ENCODE measurements at regions of chrX and their contacts with region 1.

Region 1: GRCh38 chrX:102599084-102599950 is at the start of gene ARMCX5:
- DNase-seq: peak; percentile 90
- H3K4me3 Mint-ChIP-seq: peak within 1 kb of the TSS; percentile 93
- H3K27ac Mint-ChIP-seq: peak within 1 kb of the TSS; percentile 94
- H3K4me1 Mint-ChIP-seq: peaks cover 15% of the 10 kb centered on the region
- H3K27me3 Mint-ChIP-seq: no peaks in the 10 kb centered on the region
- total RNA-seq, gene ARMCX5: 8.1 and 8.9 TPM in 2 replicates

Region 2: GRCh38 chrX:102659790-102660757 is 60.8 kb after region 1 on chrX:
- intact Hi-C with region 1: loop called (anchors 2 kb)
- DNase-seq: peak; percentile 93
- H3K4me3 Mint-ChIP-seq: peak overlapping the region; percentile 90
- H3K27ac Mint-ChIP-seq: peak overlapping the region; percentile 88
- H3K4me1 Mint-ChIP-seq: peaks cover 6% of the 10 kb centered on the region
- H3K27me3 Mint-ChIP-seq: no peaks in the 10 kb centered on the region

Region 3: GRCh38 chrX:102712952-102713625 is 113.8 kb after region 1 on chrX:
- intact Hi-C with region 1: loop called (anchors 10 kb)
- DNase-seq: no peak
- H3K4me3 Mint-ChIP-seq: peak overlapping the region; percentile 64
- H3K27ac Mint-ChIP-seq: no peak overlapping the region
- H3K4me1 Mint-ChIP-seq: no peaks in the 10 kb centered on the region
- H3K27me3 Mint-ChIP-seq: peaks cover 19% of the 10 kb centered on the region

Region 4: DNA sequence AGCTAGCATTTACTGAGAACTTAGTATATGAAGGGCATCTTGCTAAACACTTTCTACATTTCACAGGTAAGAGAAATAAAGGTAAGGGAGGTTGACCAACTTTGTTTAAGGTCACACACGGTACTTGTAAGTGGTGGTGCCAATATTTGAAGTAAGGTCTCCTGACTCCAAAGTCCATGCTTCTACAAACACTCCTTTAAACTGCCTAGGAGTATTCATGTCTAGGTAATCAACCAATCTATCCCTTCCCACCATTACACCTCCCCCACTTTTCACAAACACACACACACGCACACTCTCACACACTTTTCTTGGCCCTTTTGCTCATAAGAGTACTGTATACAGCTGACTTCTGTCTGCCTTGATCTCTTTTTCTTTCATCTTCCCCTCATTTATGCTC is 457.6 kb after region 1 on chrX:
- intact Hi-C with region 1: no loop called
- DNase-seq: no peak
- H3K4me3 Mint-ChIP-seq: no peak overlapping the region
- H3K27ac Mint-ChIP-seq: no peak overlapping the region
- H3K4me1 Mint-ChIP-seq: no peaks in the 10 kb centered on the region
- H3K27me3 Mint-ChIP-seq: no peaks in the 10 kb centered on the region

Measured in activated CD4-positive, alpha-beta T cell treated with anti-CD3 and anti-CD28 coated beads, Interleukin-2, amount 10 ng/mL, durations not matched to agents 24 days and 14 days (primary cell).